SK-N-SH (cell line): ENCODE measurements at regions of chr20 and their contacts with region 1.

Region 1: GRCh38 chr20:56554869-56555268 is 21.8 kb downstream of the FAM209B start:
- DNase-seq: no peak
- H3K4me3 ChIP-seq: no peak overlapping the region
- H3K27ac ChIP-seq: no peak overlapping the region
- H3K4me1 ChIP-seq: no peaks in the 10 kb centered on the region
- H3K27me3 ChIP-seq: peaks cover 45% of the 10 kb centered on the region
- CTCF ChIP-seq: no peak
- EP300 ChIP-seq: 0 out of 4 replicates have a peak, but pooled peaks of 1 of the 2 experiments have one; percentile 31
- RAD21 ChIP-seq: no peak

Region 2: GRCh38 chr20:56468316-56469082 is 86.4 kb before region 1 on chr20 and contains the start of gene RTF2:
- CTCF ChIA-PET with region 1: no interaction called
- POLR2A ChIA-PET with region 1: no interaction called
- DNase-seq: peak; percentile 92
- H3K4me3 ChIP-seq: peak within 1 kb of the TSS; percentile 95
- H3K27ac ChIP-seq: peak within 1 kb of the TSS; percentile 76
- H3K4me1 ChIP-seq: peaks cover 4 to 10% of the 10 kb centered on the region in 2 experiments; a peak in 3 of 4 replicates
- H3K27me3 ChIP-seq: no peaks in the 10 kb centered on the region
- CTCF ChIP-seq: no peak
- EP300 ChIP-seq: peak in 1 of 2 experiments; percentile 36; a peak in 1 of 4 replicates
- RAD21 ChIP-seq: no peak
- polyA plus RNA-seq, gene RTF2: 78.2 and 82.8 TPM in 2 replicates

Region 3: GRCh38 chr20:56540420-56540819 is 14.4 kb before region 1 on chr20:
- CTCF ChIA-PET with region 1: interaction called, 27 read pairs
- POLR2A ChIA-PET with region 1: no interaction called
- DNase-seq: no peak
- H3K4me3 ChIP-seq: no peak overlapping the region
- H3K27ac ChIP-seq: no peak overlapping the region
- H3K4me1 ChIP-seq: no peaks in the 10 kb centered on the region
- H3K27me3 ChIP-seq: peaks cover 25% of the 10 kb centered on the region; the same call in 1 of the 2 replicates
- CTCF ChIP-seq: no peak
- EP300 ChIP-seq: no peak
- RAD21 ChIP-seq: no peak

Region 4: GRCh38 chr20:56579287-56579710 is 24.4 kb after region 1 on chr20:
- CTCF ChIA-PET with region 1: interaction called, 11 read pairs
- POLR2A ChIA-PET with region 1: no interaction called
- DNase-seq: no peak
- H3K4me3 ChIP-seq: no peak overlapping the region
- H3K27ac ChIP-seq: no peak overlapping the region
- H3K4me1 ChIP-seq: no peaks in the 10 kb centered on the region
- H3K27me3 ChIP-seq: peaks cover 55% of the 10 kb centered on the region; the same call in 1 of the 2 replicates
- CTCF ChIP-seq: no peak
- EP300 ChIP-seq: no peak
- RAD21 ChIP-seq: no peak

Region 5: DNA sequence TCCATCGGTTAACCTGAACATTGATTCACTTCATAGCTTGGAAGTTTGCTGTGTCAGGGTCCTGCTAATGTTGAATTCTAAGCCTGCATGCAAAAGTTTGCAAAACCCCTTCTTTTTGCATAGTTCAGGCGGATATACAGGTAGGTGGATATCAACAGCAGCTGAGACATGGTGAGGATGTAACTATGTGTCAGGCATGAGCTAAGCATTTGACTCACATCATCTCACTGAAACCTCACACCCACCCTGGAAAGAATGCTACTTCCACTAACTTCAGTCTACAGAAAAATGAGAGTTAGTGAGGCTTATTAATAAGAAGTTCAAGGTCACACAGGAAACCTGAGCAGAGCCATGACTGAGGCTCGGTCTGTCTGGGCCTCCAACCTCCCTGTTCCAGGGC is 434.6 kb after region 1 on chr20:
- CTCF ChIA-PET with region 1: interaction called, 47 read pairs
- POLR2A ChIA-PET with region 1: no interaction called
- DNase-seq: no peak
- H3K4me3 ChIP-seq: no peak overlapping the region
- H3K27ac ChIP-seq: no peak overlapping the region
- H3K4me1 ChIP-seq: no peaks in the 10 kb centered on the region
- H3K27me3 ChIP-seq: peaks cover 35% of the 10 kb centered on the region; the same call in 1 of the 2 replicates
- CTCF ChIP-seq: no peak
- EP300 ChIP-seq: no peak
- RAD21 ChIP-seq: no peak

Region 6: GRCh38 chr20:57061058-57061900 is 506.4 kb after region 1 on chr20:
- CTCF ChIA-PET with region 1: interaction called, 30 read pairs
- POLR2A ChIA-PET with region 1: no interaction called
- DNase-seq: peak; percentile 70
- H3K4me3 ChIP-seq: peak overlapping the region in 1 of 2 experiments; percentile 43; a peak in 1 of 4 replicates
- H3K27ac ChIP-seq: no peak overlapping the region
- H3K4me1 ChIP-seq: no peaks in the 10 kb centered on the region
- H3K27me3 ChIP-seq: peaks cover 25% of the 10 kb centered on the region; the same call in 1 of the 2 replicates
- CTCF ChIP-seq: peak; percentile 45
- EP300 ChIP-seq: no peak
- RAD21 ChIP-seq: peak; percentile 67